Heart left ventricle (tissue), 16 donors: ENCODE measurements at regions of chr14 and their contacts with region 1.

Region 1: GRCh38 chr14:33848706-33849454 is 102.0 kb downstream of the EGLN3 start:
- DNase-seq: peak; percentile 58 to 72 (median 62)
- ATAC-seq: peak; percentile 80 to 96 (median 91)
- H3K4me3 ChIP-seq: no peak overlapping the region
- H3K27ac ChIP-seq: no peak overlapping the region
- H3K4me1 ChIP-seq: peaks cover 0 to 9% (median 0%) of the 10 kb centered on the region in 12 donors
- H3K27me3 ChIP-seq: no peaks in the 10 kb centered on the region
- CTCF ChIP-seq: peak; percentile 57 to 80 (median 72)
- POLR2A ChIP-seq: no peak

Region 2: GRCh38 chr14:34300882-34301734 is 452.2 kb after region 1 on chr14:
- intact Hi-C with region 1: loop called in 3 of 10 experiments (anchors 5 kb)
- DNase-seq: no peak
- ATAC-seq: peak in 3 of 4 donors; percentile 38 to 70 (median 45)
- H3K4me3 ChIP-seq: no peak overlapping the region
- H3K27ac ChIP-seq: no peak overlapping the region
- H3K4me1 ChIP-seq: no peaks in the 10 kb centered on the region
- H3K27me3 ChIP-seq: no peaks in the 10 kb centered on the region
- CTCF ChIP-seq: peak; percentile 46 to 74 (median 62)
- POLR2A ChIP-seq: no peak